MCF 10A (cell line): ENCODE measurements at regions of chr1 and their contacts with region 1.

Region 1: GRCh38 chr1:246012341-246012740 is 494.7 kb downstream of the SMYD3 start:
- DNase-seq: peak; percentile 71
- H3K4me3 Mint-ChIP-seq: no peak overlapping the region
- H3K27ac Mint-ChIP-seq: no peak overlapping the region
- H3K4me1 Mint-ChIP-seq: no peaks in the 10 kb centered on the region
- H3K27me3 Mint-ChIP-seq: no peaks in the 10 kb centered on the region
- CTCF ChIP-seq: peak; percentile 81

Region 2: GRCh38 chr1:245679821-245680780 is 332.2 kb before region 1 on chr1:
- CTCF ChIA-PET with region 1: no interaction called
- POLR2A ChIA-PET with region 1: no interaction called
- intact Hi-C with region 1: no loop called
- DNase-seq: no peak
- H3K4me3 Mint-ChIP-seq: no peak overlapping the region
- H3K27ac Mint-ChIP-seq: no peak overlapping the region
- H3K4me1 Mint-ChIP-seq: no peaks in the 10 kb centered on the region
- H3K27me3 Mint-ChIP-seq: no peaks in the 10 kb centered on the region
- CTCF ChIP-seq: no peak

Region 3: GRCh38 chr1:246117066-246117791 is 104.9 kb after region 1 on chr1:
- CTCF ChIA-PET with region 1: interaction called, 6 read pairs
- POLR2A ChIA-PET with region 1: no interaction called
- intact Hi-C with region 1: loop called (anchors 2 kb)
- DNase-seq: peak; percentile 61
- H3K4me3 Mint-ChIP-seq: no peak overlapping the region
- H3K27ac Mint-ChIP-seq: no peak overlapping the region
- H3K4me1 Mint-ChIP-seq: no peaks in the 10 kb centered on the region
- H3K27me3 Mint-ChIP-seq: no peaks in the 10 kb centered on the region
- CTCF ChIP-seq: peak; percentile 45

Region 4: GRCh38 chr1:246246430-246246829 is 234.1 kb after region 1 on chr1:
- CTCF ChIA-PET with region 1: interaction called, 11 read pairs
- POLR2A ChIA-PET with region 1: no interaction called
- intact Hi-C with region 1: loop called (anchors 1 kb)
- DNase-seq: no peak
- H3K4me3 Mint-ChIP-seq: no peak overlapping the region
- H3K27ac Mint-ChIP-seq: no peak overlapping the region
- H3K4me1 Mint-ChIP-seq: no peaks in the 10 kb centered on the region
- H3K27me3 Mint-ChIP-seq: no peaks in the 10 kb centered on the region
- CTCF ChIP-seq: peak; percentile 30